ENCODE measurements at regions of chr20 and their contacts with region 1.

Region 1: GRCh38 chr20:33846291-33846935 is 35.3 kb downstream of the CHMP4B start:
- DNase-seq: peak in 1 of 2 donors; percentile 53
- ATAC-seq: peak; percentile 31 to 72 (median 56)
- H3K4me3 ChIP-seq: no peak overlapping the region
- H3K27ac ChIP-seq: peak overlapping the region in 2 of 10 donors; percentile 14 to 34
- H3K4me1 ChIP-seq: peaks cover 25 to 68% (median 56%) of the 10 kb centered on the region in 9 donors
- H3K27me3 ChIP-seq: no peaks in the 10 kb centered on the region
- CTCF ChIP-seq: no peak

Region 2: GRCh38 chr20:33791959-33792597 is 54.3 kb before region 1 on chr20:
- intact Hi-C with region 1: loop called in 1 of 10 experiments (anchors 5 kb)
- DNase-seq: peak; percentile 40 to 43
- ATAC-seq: peak in 4 of 8 donors; percentile 25 to 48 (median 34)
- H3K4me3 ChIP-seq: no peak overlapping the region
- H3K27ac ChIP-seq: peak overlapping the region in 6 of 10 donors; percentile 31 to 76 (median 59)
- H3K4me1 ChIP-seq: peaks cover 10 to 57% (median 43%) of the 10 kb centered on the region in 9 donors
- H3K27me3 ChIP-seq: no peaks in the 10 kb centered on the region
- CTCF ChIP-seq: peak; percentile 59 to 85 (median 80)

Region 3: GRCh38 chr20:33810885-33811777 is 35.3 kb before region 1 on chr20 and contains the start of gene CHMP4B:
- intact Hi-C with region 1: loop called in 2 of 10 experiments (anchors 1 to 5 kb)
- DNase-seq: peak; percentile 99 to 100
- ATAC-seq: peak; percentile 98 to 100 (median 99)
- H3K4me3 ChIP-seq: peak within 1 kb of the TSS; percentile 76 to 97 (median 96)
- H3K27ac ChIP-seq: peak within 1 kb of the TSS; percentile 87 to 99 (median 94)
- H3K4me1 ChIP-seq: peaks cover 4 to 54% (median 43%) of the 10 kb centered on the region in 9 donors
- H3K27me3 ChIP-seq: no peaks in the 10 kb centered on the region
- CTCF ChIP-seq: no peak
- total RNA-seq, gene CHMP4B: 88.3 to 137 (median 103) TPM

Region 4: DNA sequence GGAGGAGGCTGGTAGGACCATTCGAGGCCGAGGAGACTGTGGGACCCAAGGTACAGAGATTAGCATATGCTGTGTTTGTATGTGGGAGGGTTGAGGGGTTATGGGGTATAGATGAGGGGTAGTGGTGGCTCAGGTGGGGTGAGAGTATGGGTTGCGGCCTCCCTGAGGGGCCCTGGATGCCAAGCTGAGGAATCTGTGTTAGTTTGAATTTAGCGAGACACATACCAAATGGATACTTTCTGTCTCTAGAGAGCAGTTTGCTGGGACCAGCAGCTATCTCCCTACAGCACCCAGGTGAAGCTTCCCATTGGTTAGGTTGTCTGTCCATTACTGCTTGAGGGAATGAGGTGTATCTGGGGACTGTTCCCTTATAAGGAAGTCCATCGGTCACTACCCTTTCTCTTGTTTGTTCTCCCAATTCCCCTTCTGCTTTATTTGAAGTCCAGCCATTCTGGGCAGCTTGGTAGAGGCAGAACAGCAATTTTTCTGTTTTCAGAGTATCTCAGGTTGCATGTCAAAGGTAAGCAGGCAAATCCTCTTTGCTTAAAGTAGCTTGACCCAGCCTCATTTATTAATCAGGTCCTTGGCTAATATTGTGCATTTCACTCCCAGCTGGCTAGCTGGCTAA is 20.0 kb before region 1 on chr20:
- intact Hi-C with region 1: no loop called
- DNase-seq: no peak
- ATAC-seq: no peak
- H3K4me3 ChIP-seq: no peak overlapping the region
- H3K27ac ChIP-seq: peak overlapping the region in 2 of 10 donors; percentile 0 to 24
- H3K4me1 ChIP-seq: peaks cover 19 to 100% (median 89%) of the 10 kb centered on the region in 9 donors
- H3K27me3 ChIP-seq: no peaks in the 10 kb centered on the region
- CTCF ChIP-seq: no peak

Measured in heart right ventricle (tissue), 16 donors.